ENCODE measurements at regions of chr3 and their contacts with region 1.

Region 1: GRCh38 chr3:118760585-118761290 is 273.9 kb downstream of the IGSF11 start:
- DNase-seq: peak; percentile 23 to 53
- H3K4me3 ChIP-seq: no peak overlapping the region; a peak in 1 of 8 replicates
- H3K27ac ChIP-seq: no peak overlapping the region
- H3K4me1 ChIP-seq: peaks cover 0 to 10% (median 3%) of the 10 kb centered on the region in 4 experiments; a peak in 5 of 7 replicates
- H3K27me3 ChIP-seq: no peaks in the 10 kb centered on the region
- CTCF ChIP-seq: peak; percentile 42 to 86 (median 69)
- EP300 ChIP-seq: no peak
- POLR2A ChIP-seq: no peak
- RAD21 ChIP-seq: peak; percentile 61 to 67

Region 2: GRCh38 chr3:118817748-118818165 is 57.0 kb after region 1 on chr3:
- CTCF ChIA-PET with region 1: interaction called, 13 read pairs
- POLR2A ChIA-PET with region 1: no interaction called
- DNase-seq: no peak
- H3K4me3 ChIP-seq: no peak overlapping the region
- H3K27ac ChIP-seq: no peak overlapping the region
- H3K4me1 ChIP-seq: no peaks in the 10 kb centered on the region
- H3K27me3 ChIP-seq: no peaks in the 10 kb centered on the region
- CTCF ChIP-seq: peak in 2 of 3 experiments; percentile 68 to 89; a peak in 3 of 4 replicates
- EP300 ChIP-seq: no peak
- POLR2A ChIP-seq: no peak
- RAD21 ChIP-seq: peak; percentile 92 to 94

Region 3: GRCh38 chr3:118991775-118992174 is 231.0 kb after region 1 on chr3:
- CTCF ChIA-PET with region 1: no interaction called
- POLR2A ChIA-PET with region 1: no interaction called
- DNase-seq: no peak
- H3K4me3 ChIP-seq: no peak overlapping the region
- H3K27ac ChIP-seq: no peak overlapping the region
- H3K4me1 ChIP-seq: peaks cover 0 to 15% (median 6%) of the 10 kb centered on the region in 4 experiments; a peak in 3 of 7 replicates
- H3K27me3 ChIP-seq: no peaks in the 10 kb centered on the region
- CTCF ChIP-seq: no peak
- EP300 ChIP-seq: no peak
- POLR2A ChIP-seq: no peak
- RAD21 ChIP-seq: no peak

Measured in H1 (cell line).